ENCODE measurements at regions of chr17 and their contacts with region 1.

Region 1: DNA sequence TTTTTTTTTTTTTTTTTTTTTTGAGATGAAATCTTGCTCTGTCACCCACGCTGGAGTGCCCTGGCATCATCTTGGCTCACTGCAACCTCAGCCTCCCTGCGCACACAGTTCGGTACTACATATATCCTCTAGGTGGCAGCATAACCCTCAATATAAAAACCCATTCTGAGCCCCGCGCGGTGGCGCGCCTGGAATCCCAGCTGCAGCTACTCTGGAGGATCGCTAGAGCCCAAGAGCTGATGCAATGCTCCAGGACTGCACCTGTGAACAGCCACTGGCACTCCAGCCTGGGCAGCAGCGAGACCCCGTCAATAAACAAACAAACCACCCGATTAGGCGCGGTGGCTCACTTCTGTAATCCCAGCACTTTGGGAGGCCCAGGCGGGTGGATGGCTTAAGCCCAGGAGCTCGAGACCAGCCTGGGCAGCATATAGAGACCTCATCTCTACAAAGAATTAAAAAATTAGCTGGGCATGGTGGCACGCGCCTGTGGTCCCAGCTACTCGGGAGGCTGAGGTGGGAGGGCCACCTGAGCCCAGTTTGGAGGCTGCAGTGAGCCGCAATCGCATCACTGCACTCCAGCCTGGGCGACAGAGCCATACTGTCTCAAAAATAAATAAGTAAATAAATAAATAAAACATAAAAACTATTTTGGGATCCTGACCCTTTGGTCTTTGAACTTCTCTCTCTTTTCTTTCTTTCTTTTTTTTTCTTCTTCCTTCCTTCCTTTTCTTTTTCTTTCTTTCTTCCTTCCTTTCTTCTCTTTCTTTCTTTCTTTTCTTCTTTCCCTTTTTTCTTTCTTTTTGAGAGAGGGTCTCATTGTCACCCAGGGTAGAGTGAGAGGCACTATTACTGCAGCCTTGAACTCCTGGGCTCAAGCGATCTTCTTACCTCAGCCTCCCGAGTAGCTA is 15.4 kb upstream of the AKAP10 start:
- DNase-seq: peak; percentile 80
- H3K4me3 ChIP-seq: peak overlapping the region; percentile 9 to 40; a peak in 1 of 4 replicates
- H3K27ac ChIP-seq: no peak overlapping the region
- H3K4me1 ChIP-seq: no peaks in the 10 kb centered on the region
- H3K27me3 ChIP-seq: no peaks in the 10 kb centered on the region
- CTCF ChIP-seq: peak; percentile 72
- EP300 ChIP-seq: no peak
- RAD21 ChIP-seq: peak; percentile 93

Region 2: GRCh38 chr17:19979917-19980770 is 12.9 kb before region 1 on chr17:
- CTCF ChIA-PET with region 1: interaction called, 13 read pairs
- POLR2A ChIA-PET with region 1: interaction called, 7 read pairs
- DNase-seq: no peak
- H3K4me3 ChIP-seq: no peak overlapping the region
- H3K27ac ChIP-seq: no peak overlapping the region
- H3K4me1 ChIP-seq: peaks cover 4 to 11% of the 10 kb centered on the region in 2 experiments; a peak in 1 of 4 replicates
- H3K27me3 ChIP-seq: no peaks in the 10 kb centered on the region
- CTCF ChIP-seq: no peak
- EP300 ChIP-seq: no peak
- RAD21 ChIP-seq: no peak

Region 3: DNA sequence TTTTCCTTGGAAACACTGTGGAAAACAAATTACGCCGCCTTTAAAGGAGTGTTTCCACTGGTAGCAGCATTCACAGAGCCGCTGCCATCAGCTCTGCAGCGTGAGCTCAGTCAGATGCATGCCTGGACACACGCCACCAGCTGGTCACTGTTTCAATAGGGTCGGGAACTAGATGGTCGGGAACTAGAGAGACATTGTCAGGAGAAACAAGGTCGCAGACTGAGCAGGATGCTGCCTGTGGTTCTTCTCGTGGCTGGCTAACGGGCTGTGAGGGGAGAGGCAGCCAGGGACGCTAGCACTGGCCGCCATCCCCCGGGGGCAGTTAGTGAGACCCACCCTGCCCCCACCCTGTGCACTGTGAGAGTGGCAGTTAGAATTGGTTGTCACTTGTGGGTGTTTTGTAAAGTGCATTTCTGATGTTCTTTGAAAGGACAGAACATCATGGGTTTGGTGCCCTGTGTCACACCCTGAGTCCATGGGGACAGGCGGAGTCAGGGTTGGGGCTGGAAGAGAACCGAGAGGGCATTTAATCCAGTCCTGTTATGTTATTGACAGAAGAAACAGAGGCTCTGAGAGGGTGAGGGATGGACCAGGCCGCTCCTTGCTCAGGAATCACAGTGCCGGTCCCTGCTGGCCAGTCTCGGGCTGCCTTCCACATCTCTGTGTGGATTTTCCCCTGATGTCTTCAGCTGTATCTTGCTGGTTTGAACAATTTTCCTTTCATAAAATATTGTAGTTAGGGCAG is 102.5 kb after region 1 on chr17:
- CTCF ChIA-PET with region 1: interaction called, 23 read pairs
- POLR2A ChIA-PET with region 1: no interaction called
- DNase-seq: peak; percentile 80
- H3K4me3 ChIP-seq: peak overlapping the region; percentile 0 to 27; a peak in 3 of 4 replicates
- H3K27ac ChIP-seq: peak overlapping the region in 1 of 2 experiments; percentile 77; a peak in 2 of 4 replicates
- H3K4me1 ChIP-seq: peaks cover 0 to 14% of the 10 kb centered on the region in 2 experiments; a peak in 1 of 4 replicates
- H3K27me3 ChIP-seq: no peaks in the 10 kb centered on the region
- CTCF ChIP-seq: peak; percentile 49
- EP300 ChIP-seq: no peak
- RAD21 ChIP-seq: peak; percentile 60

Region 4: GRCh38 chr17:20825539-20825938 is 832.5 kb after region 1 on chr17:
- CTCF ChIA-PET with region 1: no interaction called
- POLR2A ChIA-PET with region 1: no interaction called
- DNase-seq: no peak
- H3K4me3 ChIP-seq: no peak overlapping the region
- H3K27ac ChIP-seq: no peak overlapping the region
- H3K4me1 ChIP-seq: peaks cover 0 to 2% of the 10 kb centered on the region in 2 experiments; a peak in 1 of 4 replicates
- H3K27me3 ChIP-seq: no peaks in the 10 kb centered on the region; the same call in 1 of the 2 replicates
- CTCF ChIP-seq: no peak
- EP300 ChIP-seq: no peak
- RAD21 ChIP-seq: no peak